ENCODE measurements at regions of chr22 and their contacts with region 1.

Region 1: DNA sequence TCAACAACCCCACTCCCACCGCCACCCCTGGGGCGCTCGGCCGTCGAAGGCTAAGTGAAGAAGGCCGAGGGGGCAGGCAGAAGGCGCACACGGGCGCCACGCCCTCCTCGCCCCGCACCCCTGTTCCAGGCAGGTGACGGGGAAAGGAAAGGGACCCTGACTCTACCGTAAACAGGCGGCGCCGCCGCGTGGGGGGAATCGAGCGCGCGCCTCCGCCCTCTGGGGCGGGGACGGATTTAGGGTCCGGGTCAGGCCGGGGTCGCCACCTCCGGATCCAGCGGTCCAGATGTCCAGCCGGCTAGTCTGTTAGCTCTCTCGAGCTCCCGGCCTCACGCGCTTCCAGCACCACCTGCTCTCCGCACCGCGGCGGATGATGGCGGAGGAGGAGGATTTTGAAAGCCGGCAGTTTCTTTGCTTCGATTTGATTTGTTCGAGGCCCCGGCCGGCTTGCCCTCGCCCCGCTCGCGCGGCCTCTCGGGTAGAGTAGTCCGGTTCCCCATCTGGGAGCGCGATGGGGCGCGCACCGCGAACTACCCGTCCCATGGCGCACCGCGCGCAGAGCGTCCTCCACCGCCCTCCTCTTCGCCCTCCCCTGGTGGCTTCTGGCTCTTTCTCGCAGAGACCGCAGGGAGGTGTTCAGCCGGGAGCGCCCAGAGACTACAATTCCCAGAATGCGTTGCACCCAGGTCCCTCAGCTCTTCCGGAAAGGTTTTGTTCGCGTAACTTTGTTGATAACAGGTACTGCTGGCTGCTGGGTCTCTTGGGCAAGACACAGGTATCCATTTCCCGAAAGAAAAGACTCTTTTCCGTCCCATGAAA is at the start of gene RANGAP1:
- DNase-seq: peak; percentile 96 to 98 (median 98)
- H3K4me3 ChIP-seq: peak within 1 kb of the TSS; percentile 90 to 99 (median 96)
- H3K4me3 Mint-ChIP-seq: peak within 1 kb of the TSS; percentile 80 to 94
- H3K27ac ChIP-seq: peak within 1 kb of the TSS; percentile 67 to 97
- H3K27ac Mint-ChIP-seq: peak within 1 kb of the TSS; percentile 95 to 99 (median 98)
- H3K4me1 ChIP-seq: peaks cover 25 to 33% of the 10 kb centered on the region in 2 donors
- H3K4me1 Mint-ChIP-seq: peaks cover 34% of the 10 kb centered on the region
- H3K27me3 ChIP-seq: no peaks in the 10 kb centered on the region
- H3K27me3 Mint-ChIP-seq: peaks cover 0 to 5% (median 0%) of the 10 kb centered on the region in 3 donors
- CTCF ChIP-seq: peak; percentile 4
- polyA plus RNA-seq, gene RANGAP1: 8.3 to 30.2 (median 8.5) TPM

Region 2: GRCh38 chr22:40044102-40044869 is 1241.7 kb before region 1 on chr22:
- intact Hi-C with region 1: loop called in 1 of 2 experiments (anchors 10 kb)
- DNase-seq: peak; percentile 98 to 99 (median 99)
- H3K4me3 ChIP-seq: peak overlapping the region; percentile 59 to 95 (median 88)
- H3K4me3 Mint-ChIP-seq: peak overlapping the region; percentile 99
- H3K27ac ChIP-seq: peak overlapping the region; percentile 86 to 99
- H3K27ac Mint-ChIP-seq: peak overlapping the region; percentile 98 to 100 (median 99)
- H3K4me1 ChIP-seq: peaks cover 31 to 41% of the 10 kb centered on the region in 2 donors
- H3K4me1 Mint-ChIP-seq: peaks cover 43% of the 10 kb centered on the region
- H3K27me3 ChIP-seq: no peaks in the 10 kb centered on the region
- H3K27me3 Mint-ChIP-seq: peaks cover 0 to 6% (median 2%) of the 10 kb centered on the region in 3 donors
- CTCF ChIP-seq: no peak

Region 3: GRCh38 chr22:40856513-40857308 is 429.3 kb before region 1 on chr22 and contains the starts of genes ST13 and XPNPEP3:
- intact Hi-C with region 1: loop called in 1 of 2 experiments (anchors 5 kb)
- DNase-seq: peak; percentile 92 to 96 (median 94)
- H3K4me3 ChIP-seq: peak within 1 kb of the TSS; percentile 87 to 98 (median 89)
- H3K4me3 Mint-ChIP-seq: peak within 1 kb of the TSS; percentile 97 to 99
- H3K27ac ChIP-seq: peak within 1 kb of the TSS; percentile 95 to 97
- H3K27ac Mint-ChIP-seq: peak within 1 kb of the TSS; percentile 100
- H3K4me1 ChIP-seq: peaks cover 18 to 28% of the 10 kb centered on the region in 2 donors
- H3K4me1 Mint-ChIP-seq: peaks cover 22% of the 10 kb centered on the region
- H3K27me3 ChIP-seq: no peaks in the 10 kb centered on the region
- H3K27me3 Mint-ChIP-seq: no peaks in the 10 kb centered on the region
- CTCF ChIP-seq: no peak
- polyA plus RNA-seq, gene ST13: 56.1 to 81.3 (median 67.2) TPM
- polyA plus RNA-seq, gene XPNPEP3: 3.6 to 9.4 (median 7.3) TPM

Region 4: DNA sequence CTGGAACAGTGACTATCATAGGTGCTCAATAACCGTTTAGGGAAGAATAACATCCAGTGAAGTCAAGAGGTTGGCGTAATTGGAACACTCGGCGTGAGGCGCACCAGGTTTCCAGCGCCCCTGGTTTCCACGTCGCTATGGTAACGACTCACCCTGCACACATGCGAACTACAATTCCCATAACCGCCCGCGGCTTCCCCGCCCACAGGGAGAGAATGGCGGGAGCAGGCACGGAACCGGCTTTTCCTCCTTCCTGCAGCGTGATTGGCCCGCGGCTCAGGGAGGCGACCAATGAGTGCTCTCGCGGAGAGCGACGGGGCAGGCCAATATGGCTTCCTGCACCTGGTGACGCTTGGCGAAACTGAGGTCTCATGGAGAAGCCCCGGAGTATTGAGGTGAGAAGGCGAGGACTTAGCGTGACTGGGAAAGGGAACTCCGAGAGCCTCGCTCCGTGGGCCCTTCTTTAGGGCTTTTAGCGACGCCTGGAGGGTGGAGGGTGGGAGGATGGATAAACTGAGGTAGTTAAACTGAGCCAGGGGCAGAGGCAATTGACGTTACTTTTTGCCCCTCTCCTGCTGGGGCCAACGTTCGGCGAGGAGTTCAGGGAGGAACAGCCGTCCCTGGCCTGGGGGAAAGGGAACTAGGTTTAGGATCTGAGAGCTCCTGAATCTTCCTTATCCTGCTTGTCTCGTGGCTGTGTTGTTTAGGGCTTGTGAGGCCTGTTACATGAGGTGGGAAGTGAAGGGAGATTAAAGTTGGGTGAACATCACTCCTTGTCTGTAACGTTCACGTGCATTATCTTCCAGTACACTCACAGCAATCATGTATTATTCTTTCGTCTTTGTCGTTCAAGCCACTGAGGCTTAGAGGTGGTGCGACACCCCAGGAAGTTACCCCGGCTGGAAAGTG is 80.8 kb before region 1 on chr22 and contains the start of gene L3MBTL2:
- intact Hi-C with region 1: loop called in 1 of 2 experiments (anchors 10 kb)
- DNase-seq: peak; percentile 87 to 97 (median 95)
- H3K4me3 ChIP-seq: peak within 1 kb of the TSS; percentile 73 to 97 (median 90)
- H3K4me3 Mint-ChIP-seq: peak within 1 kb of the TSS; percentile 96 to 98
- H3K27ac ChIP-seq: peak within 1 kb of the TSS; percentile 58 to 92
- H3K27ac Mint-ChIP-seq: peak within 1 kb of the TSS; percentile 90 to 97 (median 95)
- H3K4me1 ChIP-seq: peaks cover 20 to 22% of the 10 kb centered on the region in 2 donors
- H3K4me1 Mint-ChIP-seq: peaks cover 23% of the 10 kb centered on the region
- H3K27me3 ChIP-seq: no peaks in the 10 kb centered on the region
- H3K27me3 Mint-ChIP-seq: peaks cover 0 to 2% (median 1%) of the 10 kb centered on the region in 3 donors
- CTCF ChIP-seq: no peak
- polyA plus RNA-seq, gene L3MBTL2: 13.6 to 15.2 (median 14.0) TPM

Region 5: GRCh38 chr22:41381329-41382097 is 95.5 kb after region 1 on chr22 and contains the start of gene TEF:
- intact Hi-C with region 1: loop called in 1 of 2 experiments (anchors 5 kb)
- DNase-seq: peak; percentile 97 to 98 (median 98)
- H3K4me3 ChIP-seq: peak within 1 kb of the TSS; percentile 54 to 85 (median 70)
- H3K4me3 Mint-ChIP-seq: peak within 1 kb of the TSS; percentile 80 to 89
- H3K27ac ChIP-seq: peak within 1 kb of the TSS; percentile 87 to 90
- H3K27ac Mint-ChIP-seq: peak within 1 kb of the TSS; percentile 92 to 99 (median 95)
- H3K4me1 ChIP-seq: peaks cover 12 to 18% of the 10 kb centered on the region in 2 donors
- H3K4me1 Mint-ChIP-seq: peaks cover 17% of the 10 kb centered on the region
- H3K27me3 ChIP-seq: no peaks in the 10 kb centered on the region
- H3K27me3 Mint-ChIP-seq: peaks cover 3 to 7% (median 3%) of the 10 kb centered on the region in 3 donors
- CTCF ChIP-seq: no peak
- polyA plus RNA-seq, gene TEF: 0.71 to 1.7 (median 1.1) TPM

Region 6: DNA sequence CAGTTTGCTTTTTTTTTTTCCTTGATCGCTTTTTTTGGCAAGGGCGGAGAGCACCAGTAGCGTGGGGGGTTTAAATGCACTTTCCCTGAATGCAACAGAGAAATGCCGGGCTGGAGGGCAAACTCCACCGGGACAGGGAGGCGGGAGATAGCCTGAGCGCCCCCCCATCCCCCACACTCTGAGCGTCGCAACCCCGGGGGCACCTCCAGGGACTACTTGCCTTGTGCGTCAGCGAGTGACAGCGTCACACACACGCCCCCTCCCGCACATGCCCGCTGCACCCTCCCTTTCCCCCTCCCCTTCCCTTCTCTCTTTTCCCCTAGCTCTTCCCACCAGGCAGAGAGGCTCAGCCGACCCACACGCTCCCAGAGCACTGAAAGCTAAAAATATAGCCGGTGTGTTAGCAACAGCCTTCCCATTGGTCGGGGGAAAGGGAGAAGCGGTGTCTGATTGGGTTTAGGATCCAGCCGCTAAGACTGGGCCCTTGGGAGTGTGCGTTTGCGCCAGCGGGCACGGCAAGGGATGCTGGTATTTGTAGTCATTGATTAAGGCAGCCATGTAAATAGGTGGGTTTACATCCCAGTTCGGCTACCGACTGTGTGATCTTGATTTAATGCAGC is 162.3 kb after region 1 on chr22:
- intact Hi-C with region 1: loop called in 1 of 2 experiments (anchors 5 kb)
- DNase-seq: peak; percentile 96 to 97 (median 97)
- H3K4me3 ChIP-seq: peak overlapping the region; percentile 73 to 99 (median 93)
- H3K4me3 Mint-ChIP-seq: peak overlapping the region; percentile 97 to 98
- H3K27ac ChIP-seq: peak overlapping the region; percentile 89 to 99
- H3K27ac Mint-ChIP-seq: peak overlapping the region; percentile 96 to 99 (median 98)
- H3K4me1 ChIP-seq: peaks cover 19 to 32% of the 10 kb centered on the region in 2 donors
- H3K4me1 Mint-ChIP-seq: peaks cover 26% of the 10 kb centered on the region
- H3K27me3 ChIP-seq: no peaks in the 10 kb centered on the region
- H3K27me3 Mint-ChIP-seq: peaks cover 0 to 2% (median 1%) of the 10 kb centered on the region in 3 donors
- CTCF ChIP-seq: no peak

Measured in CD14-positive monocyte (primary cell).